Natural killer cell (primary cell): ENCODE measurements at regions of chr1 and their contacts with region 1.

Region 1: GRCh38 chr1:7915826-7916500 is 24.7 kb downstream of the TNFRSF9 start:
- DNase-seq: peak; percentile 50 to 62
- ATAC-seq: peak; percentile 54 to 86 (median 66)
- H3K4me3 ChIP-seq: no peak overlapping the region
- H3K4me3 Mint-ChIP-seq: peak overlapping the region; percentile 84
- H3K27ac ChIP-seq: peak overlapping the region; percentile 41
- H3K27ac Mint-ChIP-seq: peak overlapping the region; percentile 72 to 84
- H3K4me1 ChIP-seq: peaks cover 72% of the 10 kb centered on the region
- H3K4me1 Mint-ChIP-seq: peaks cover 49 to 57% of the 10 kb centered on the region in 2 donors
- H3K27me3 ChIP-seq: no peaks in the 10 kb centered on the region
- H3K27me3 Mint-ChIP-seq: no peaks in the 10 kb centered on the region
- CTCF ChIP-seq: no peak

Region 2: DNA sequence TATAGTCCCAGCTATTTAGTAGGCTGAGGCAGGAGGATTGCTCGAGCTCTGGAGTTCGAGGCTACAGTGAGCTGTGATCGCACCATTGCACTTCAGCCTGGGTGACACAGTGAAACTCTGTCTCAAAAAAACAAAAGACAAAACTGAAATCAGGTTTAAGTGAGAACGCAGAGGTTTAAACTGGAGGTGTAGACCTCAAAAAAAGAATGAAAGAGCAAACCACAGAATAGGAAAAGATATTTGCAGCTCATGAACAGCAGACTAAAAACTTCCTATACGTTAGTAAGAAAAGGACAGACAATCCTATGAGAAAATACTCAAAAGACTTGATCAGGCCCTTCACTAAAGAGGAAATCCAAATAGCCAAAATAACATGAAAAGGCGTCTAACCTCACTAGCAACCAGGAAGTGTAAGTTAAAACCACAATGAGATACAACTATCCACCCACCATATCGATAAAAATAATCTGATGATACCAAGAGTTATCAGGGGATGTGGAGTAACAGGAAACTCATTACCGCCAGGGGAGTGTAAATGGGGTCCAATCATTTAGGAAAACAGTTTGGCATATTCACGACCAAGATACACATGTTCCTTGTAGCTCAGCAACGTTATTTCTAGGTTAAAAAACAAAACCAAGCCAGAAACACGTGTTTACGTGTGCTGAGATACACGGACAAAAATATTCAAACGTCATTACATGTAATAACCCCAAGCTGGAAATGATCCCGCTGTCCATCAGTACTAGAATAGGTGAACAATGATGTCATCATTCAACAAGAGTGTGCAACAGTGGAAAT is 14.9 kb after region 1 on chr1:
- intact Hi-C with region 1: loop called (anchors 2 kb)
- DNase-seq: peak in 1 of 2 donors; percentile 70
- ATAC-seq: peak; percentile 52 to 66 (median 59)
- H3K4me3 ChIP-seq: no peak overlapping the region
- H3K4me3 Mint-ChIP-seq: peak overlapping the region; percentile 80
- H3K27ac ChIP-seq: peak overlapping the region; percentile 84
- H3K27ac Mint-ChIP-seq: peak overlapping the region; percentile 88 to 90
- H3K4me1 ChIP-seq: peaks cover 37% of the 10 kb centered on the region
- H3K4me1 Mint-ChIP-seq: peaks cover 48 to 53% of the 10 kb centered on the region in 2 donors
- H3K27me3 ChIP-seq: no peaks in the 10 kb centered on the region
- H3K27me3 Mint-ChIP-seq: no peaks in the 10 kb centered on the region
- CTCF ChIP-seq: no peak

Region 3: GRCh38 chr1:7961216-7962015 is 45.5 kb after region 1 on chr1 and contains the start of gene PARK7:
- intact Hi-C with region 1: loop called (anchors 5 kb)
- DNase-seq: peak; percentile 100
- ATAC-seq: peak; percentile 91 to 99 (median 92)
- H3K4me3 ChIP-seq: peak within 1 kb of the TSS; percentile 79
- H3K4me3 Mint-ChIP-seq: peak within 1 kb of the TSS; percentile 98
- H3K27ac ChIP-seq: peak within 1 kb of the TSS; percentile 95
- H3K27ac Mint-ChIP-seq: peak within 1 kb of the TSS; percentile 98
- H3K4me1 ChIP-seq: peaks cover 18% of the 10 kb centered on the region
- H3K4me1 Mint-ChIP-seq: peaks cover 25 to 30% of the 10 kb centered on the region in 2 donors
- H3K27me3 ChIP-seq: no peaks in the 10 kb centered on the region
- H3K27me3 Mint-ChIP-seq: no peaks in the 10 kb centered on the region
- CTCF ChIP-seq: peak; percentile 53
- total RNA-seq, gene PARK7: 120 to 127 (median 127) TPM